Vagina (tissue), 2 donors: ENCODE measurements at regions of chr10 and their contacts with region 1.

Region 1: DNA sequence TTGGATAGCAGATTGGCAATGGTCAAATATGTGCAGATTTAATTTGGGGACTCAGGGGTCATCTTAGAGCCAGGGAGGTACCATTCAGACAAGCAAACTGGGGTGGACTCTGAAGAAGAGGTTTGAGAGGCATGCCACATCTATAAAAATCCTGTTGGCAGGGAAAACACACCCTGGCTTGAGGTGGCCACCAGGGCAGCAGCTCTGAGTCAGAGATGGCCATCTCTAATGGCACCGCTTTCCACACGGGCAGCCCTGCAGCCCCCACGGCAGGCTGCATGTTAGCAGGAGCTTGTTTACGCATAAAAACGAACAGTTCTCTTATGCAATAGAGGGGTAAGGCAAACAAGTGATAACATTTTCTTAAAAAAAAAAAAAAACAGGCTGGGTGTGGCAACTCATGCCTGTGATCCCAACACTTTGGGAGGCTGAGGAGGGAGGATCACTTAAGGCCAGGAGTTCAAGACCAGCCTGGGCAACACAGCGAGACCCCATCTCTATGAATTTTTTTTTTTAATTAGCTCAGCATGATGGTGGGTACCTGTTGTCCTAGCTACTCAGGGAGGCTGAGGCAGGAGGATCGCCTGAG is 14.9 kb downstream of the DLG5 start:
- DNase-seq: no peak
- H3K4me3 ChIP-seq: no peak overlapping the region
- H3K27ac ChIP-seq: no peak overlapping the region
- H3K4me1 ChIP-seq: peaks cover 62% of the 10 kb centered on the region
- H3K27me3 ChIP-seq: no peaks in the 10 kb centered on the region
- CTCF ChIP-seq: no peak
- POLR2A ChIP-seq: no peak

Region 2: DNA sequence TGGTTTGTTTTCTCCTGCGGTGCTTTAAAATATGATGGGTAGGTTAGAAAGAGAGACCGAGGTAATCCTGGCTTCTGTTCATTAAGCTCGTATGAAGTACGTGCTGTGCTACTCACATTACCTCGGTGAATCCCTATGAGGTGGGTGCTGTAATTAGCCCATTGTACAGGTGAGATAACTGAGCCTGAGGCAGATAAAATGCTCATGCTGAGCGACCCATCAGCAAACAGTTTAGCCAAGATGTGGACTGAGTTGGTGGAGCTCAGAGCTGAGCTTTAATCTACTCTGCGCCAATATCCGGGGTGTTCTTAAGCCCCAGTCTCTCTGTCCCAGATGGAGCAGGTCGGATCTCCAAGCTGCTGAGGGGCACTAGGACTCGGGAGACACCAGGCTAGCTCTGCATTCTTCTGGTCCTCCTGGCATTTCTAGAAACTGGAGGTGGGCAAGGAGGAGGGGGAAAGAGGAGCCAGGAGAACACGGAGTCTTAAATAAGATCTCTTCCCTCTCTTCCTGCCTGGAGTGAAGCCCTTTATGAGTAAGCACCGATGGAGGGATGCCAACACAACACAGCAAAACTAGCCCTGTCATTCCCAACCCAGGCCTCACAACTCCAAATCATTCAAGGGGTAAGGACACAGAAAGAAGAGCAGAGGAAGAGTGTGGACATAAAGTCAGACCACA is 732.5 kb before region 1 on chr10:
- intact Hi-C with region 1: no loop called
- DNase-seq: no peak
- H3K4me3 ChIP-seq: no peak overlapping the region
- H3K27ac ChIP-seq: peak overlapping the region; percentile 28
- H3K4me1 ChIP-seq: peaks cover 8% of the 10 kb centered on the region
- H3K27me3 ChIP-seq: no peaks in the 10 kb centered on the region
- CTCF ChIP-seq: no peak
- POLR2A ChIP-seq: no peak

Region 3: DNA sequence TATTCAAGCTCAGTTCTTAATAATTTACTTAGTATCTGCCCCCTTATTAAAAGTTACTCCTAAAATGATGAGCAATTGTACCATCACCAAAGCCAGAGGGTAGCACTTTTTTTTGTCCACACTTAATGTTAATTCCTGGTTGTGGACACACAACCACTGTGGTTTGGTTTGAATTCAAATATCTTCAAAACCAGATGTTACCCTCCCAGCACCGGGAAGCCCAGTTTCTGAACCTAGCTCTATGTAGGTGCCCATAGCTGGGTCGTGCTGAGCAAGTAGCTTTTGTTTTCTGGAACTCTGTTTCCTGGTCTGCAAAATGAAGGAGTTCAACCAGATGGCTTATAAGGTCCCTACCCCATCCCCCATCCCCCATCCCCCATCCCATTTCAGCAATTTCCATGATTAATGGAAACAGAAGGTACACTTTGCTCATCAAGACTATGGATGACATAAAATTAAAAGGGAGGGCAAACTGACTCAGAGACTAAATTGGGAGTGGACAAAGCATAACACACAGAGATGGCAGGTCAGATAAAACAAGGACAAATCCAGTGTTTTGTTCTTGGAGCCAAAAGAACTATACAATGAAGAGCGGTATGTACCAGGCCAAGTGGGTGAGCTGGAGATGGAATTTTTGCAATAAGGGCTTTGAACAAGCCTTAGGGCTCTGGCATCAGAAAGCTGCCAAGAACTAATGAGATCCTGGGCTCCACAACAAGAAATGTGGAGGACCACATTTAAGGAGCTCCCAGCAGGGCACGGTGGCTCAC is 41.8 kb before region 1 on chr10:
- intact Hi-C with region 1: loop called (anchors 2 kb)
- DNase-seq: no peak
- H3K4me3 ChIP-seq: no peak overlapping the region
- H3K27ac ChIP-seq: peak overlapping the region; percentile 59
- H3K4me1 ChIP-seq: peaks cover 98% of the 10 kb centered on the region
- H3K27me3 ChIP-seq: no peaks in the 10 kb centered on the region
- CTCF ChIP-seq: no peak
- POLR2A ChIP-seq: no peak